Ascending aorta (tissue), 2 donors: ENCODE measurements at regions of chr21 and their contacts with region 1.

Region 1: GRCh38 chr21:32412162-32413014 is at the start of gene EVA1C:
- DNase-seq: peak in 1 of 2 donors; percentile 84
- H3K4me3 ChIP-seq: peak within 1 kb of the TSS; percentile 81 to 87
- H3K27ac ChIP-seq: peak within 1 kb of the TSS; percentile 99 to 100
- H3K4me1 ChIP-seq: peaks cover 0 to 31% of the 10 kb centered on the region in 2 donors
- H3K27me3 ChIP-seq: no peaks in the 10 kb centered on the region
- CTCF ChIP-seq: peak in 2 of 3 experiments; percentile 5 to 52
- total RNA-seq, gene EVA1C: 147 TPM

Region 2: GRCh38 chr21:32329331-32329730 is 83.1 kb before region 1 on chr21:
- intact Hi-C with region 1: loop called (anchors 2 kb)
- DNase-seq: peak in 1 of 2 donors; percentile 86
- H3K4me3 ChIP-seq: no peak overlapping the region
- H3K27ac ChIP-seq: peak overlapping the region; percentile 81 to 89
- H3K4me1 ChIP-seq: peaks cover 15 to 20% of the 10 kb centered on the region in 2 donors
- H3K27me3 ChIP-seq: no peaks in the 10 kb centered on the region
- CTCF ChIP-seq: no peak

Region 3: GRCh38 chr21:32371913-32372314 is 40.5 kb before region 1 on chr21:
- intact Hi-C with region 1: loop called (anchors 2 kb)
- DNase-seq: peak in 1 of 2 donors; percentile 77
- H3K4me3 ChIP-seq: peak overlapping the region in 1 of 2 donors; percentile 2
- H3K27ac ChIP-seq: peak overlapping the region; percentile 84 to 86
- H3K4me1 ChIP-seq: peaks cover 0 to 31% of the 10 kb centered on the region in 2 donors
- H3K27me3 ChIP-seq: no peaks in the 10 kb centered on the region
- CTCF ChIP-seq: no peak

Region 4: DNA sequence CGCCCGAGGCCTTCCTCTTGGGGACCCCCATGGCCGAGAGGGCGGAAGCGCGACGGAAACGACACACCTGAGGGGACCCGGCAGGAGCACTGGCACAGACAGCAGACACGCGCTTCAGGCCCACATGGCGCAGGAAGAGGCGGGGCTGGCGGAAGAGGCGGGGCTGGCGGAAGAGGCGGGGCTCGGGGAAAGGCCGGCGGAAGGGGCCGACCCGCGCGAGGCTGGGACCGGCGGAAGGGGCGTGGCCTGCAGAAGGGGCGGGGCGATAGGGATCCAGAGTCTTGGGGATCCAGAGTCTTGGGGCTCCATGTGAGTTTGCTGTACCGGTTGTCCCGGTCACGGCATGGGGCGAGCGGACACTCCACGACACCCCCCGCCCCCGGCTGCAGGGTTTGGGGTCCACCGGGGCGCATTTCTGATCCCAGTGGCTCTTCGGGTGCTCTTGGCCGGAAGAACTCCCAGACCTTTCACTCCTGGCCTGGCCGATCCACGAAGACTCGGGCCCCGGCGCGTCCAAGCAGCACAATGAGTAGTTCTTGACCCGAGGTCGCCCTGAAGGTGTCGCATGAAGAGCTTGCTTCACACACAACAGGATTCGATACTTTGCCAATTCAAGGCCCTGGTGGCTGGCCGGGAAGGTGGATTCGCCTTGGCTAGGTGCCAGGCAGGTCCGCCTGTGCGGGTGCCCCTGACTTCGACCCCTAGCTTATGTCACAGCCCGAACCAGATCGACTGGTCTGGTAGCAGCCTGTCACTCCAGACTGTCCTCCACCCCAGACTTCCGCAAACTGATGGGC is 19.3 kb before region 1 on chr21 and contains the start of gene URB1:
- intact Hi-C with region 1: loop called (anchors 2 kb)
- DNase-seq: peak; percentile 59 to 93
- H3K4me3 ChIP-seq: peak within 1 kb of the TSS; percentile 82 to 88
- H3K27ac ChIP-seq: peak within 1 kb of the TSS; percentile 78 to 90
- H3K4me1 ChIP-seq: peaks cover 0 to 11% of the 10 kb centered on the region in 2 donors
- H3K27me3 ChIP-seq: no peaks in the 10 kb centered on the region
- CTCF ChIP-seq: no peak
- total RNA-seq, gene URB1: 35.4 TPM

Region 5: DNA sequence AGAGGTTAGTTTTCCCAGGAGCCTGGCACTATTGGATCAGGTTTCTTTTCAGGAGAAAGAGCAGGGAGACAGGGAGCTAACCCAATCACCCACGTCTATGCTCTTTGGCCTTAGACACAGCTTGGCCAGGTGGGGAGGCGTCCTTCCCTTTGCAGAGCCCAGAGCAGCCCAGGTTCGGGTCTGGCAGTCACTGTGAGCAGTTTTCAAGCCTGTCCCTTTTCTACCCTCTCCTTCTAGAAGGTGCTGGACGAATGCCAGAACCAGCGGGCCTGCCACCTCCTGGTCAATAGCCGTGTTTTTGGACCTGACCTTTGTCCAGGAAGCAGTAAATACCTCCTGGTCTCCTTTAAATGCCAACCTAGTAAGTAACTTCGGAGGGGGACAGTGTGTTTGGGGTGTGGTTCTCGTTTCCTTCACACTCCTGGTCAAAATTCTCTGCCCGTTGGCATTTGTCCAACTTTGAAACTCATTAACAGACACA is 45.0 kb after region 1 on chr21:
- intact Hi-C with region 1: loop called (anchors 2 kb)
- DNase-seq: no peak
- H3K4me3 ChIP-seq: no peak overlapping the region
- H3K27ac ChIP-seq: peak overlapping the region; percentile 64 to 84
- H3K4me1 ChIP-seq: peaks cover 6 to 22% of the 10 kb centered on the region in 2 donors
- H3K27me3 ChIP-seq: no peaks in the 10 kb centered on the region
- CTCF ChIP-seq: peak in 1 of 3 experiments; percentile 23

Region 6: GRCh38 chr21:32475164-32475812 is 62.9 kb after region 1 on chr21:
- intact Hi-C with region 1: no loop called
- DNase-seq: peak in 1 of 2 donors; percentile 28
- H3K4me3 ChIP-seq: no peak overlapping the region
- H3K27ac ChIP-seq: peak overlapping the region in 1 of 2 donors; percentile 27
- H3K4me1 ChIP-seq: peaks cover 3 to 14% of the 10 kb centered on the region in 2 donors
- H3K27me3 ChIP-seq: no peaks in the 10 kb centered on the region
- CTCF ChIP-seq: no peak

Region 7: DNA sequence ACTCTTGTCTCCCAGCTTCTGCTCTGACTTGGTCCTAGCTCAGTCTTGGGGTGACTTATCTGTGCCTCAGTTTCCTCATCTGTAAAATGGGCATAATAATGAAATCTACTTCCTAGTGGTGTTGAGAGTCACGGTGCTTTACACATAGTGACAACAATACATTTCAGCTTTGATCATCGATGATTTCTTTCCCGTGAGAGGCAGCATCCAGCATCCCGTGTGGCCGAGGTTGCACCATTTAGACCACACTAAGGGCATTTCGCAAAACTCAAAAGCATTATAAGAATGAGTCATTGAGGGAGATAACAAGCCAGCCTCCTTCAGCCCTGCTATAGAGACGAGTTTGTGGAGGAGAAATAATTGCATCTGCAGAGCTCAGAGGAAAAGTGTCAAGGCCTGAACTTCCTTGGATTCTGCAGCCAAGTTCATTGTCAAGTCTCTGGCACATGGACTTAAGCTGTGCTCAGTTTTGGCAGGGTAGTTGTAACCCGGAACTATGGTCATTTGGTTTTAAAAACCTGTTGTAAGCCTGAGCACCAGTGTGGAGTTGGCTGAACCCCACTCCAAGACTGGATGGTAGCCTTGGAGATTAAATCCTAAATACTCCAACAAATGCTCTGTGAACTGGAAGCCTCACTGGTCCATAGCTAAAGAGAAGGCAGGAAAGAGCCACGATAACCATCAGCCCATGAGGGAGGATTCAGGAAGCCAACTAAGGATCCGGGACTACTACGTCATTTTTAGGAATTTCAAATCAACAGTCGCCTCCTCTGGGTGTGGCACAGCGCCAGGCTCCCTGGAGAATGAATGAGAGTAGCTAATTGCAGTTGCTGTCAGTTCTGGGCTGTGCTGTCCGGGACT is 108.7 kb after region 1 on chr21:
- intact Hi-C with region 1: loop called (anchors 5 kb)
- DNase-seq: peak in 1 of 2 donors; percentile 88
- H3K4me3 ChIP-seq: no peak overlapping the region
- H3K27ac ChIP-seq: peak overlapping the region; percentile 49 to 59
- H3K4me1 ChIP-seq: peaks cover 0 to 29% of the 10 kb centered on the region in 2 donors
- H3K27me3 ChIP-seq: no peaks in the 10 kb centered on the region
- CTCF ChIP-seq: no peak

Region 8: GRCh38 chr21:32569261-32570230 is 157.2 kb after region 1 on chr21:
- intact Hi-C with region 1: loop called (anchors 2 kb)
- DNase-seq: peak; percentile 29 to 86
- H3K4me3 ChIP-seq: peak overlapping the region; percentile 58 to 68
- H3K27ac ChIP-seq: peak overlapping the region; percentile 69 to 77
- H3K4me1 ChIP-seq: peaks cover 10 to 22% of the 10 kb centered on the region in 2 donors
- H3K27me3 ChIP-seq: no peaks in the 10 kb centered on the region
- CTCF ChIP-seq: peak; percentile 81 to 86 (median 82)